ENCODE measurements at regions of chr12 and their contacts with region 1.

Region 1: DNA sequence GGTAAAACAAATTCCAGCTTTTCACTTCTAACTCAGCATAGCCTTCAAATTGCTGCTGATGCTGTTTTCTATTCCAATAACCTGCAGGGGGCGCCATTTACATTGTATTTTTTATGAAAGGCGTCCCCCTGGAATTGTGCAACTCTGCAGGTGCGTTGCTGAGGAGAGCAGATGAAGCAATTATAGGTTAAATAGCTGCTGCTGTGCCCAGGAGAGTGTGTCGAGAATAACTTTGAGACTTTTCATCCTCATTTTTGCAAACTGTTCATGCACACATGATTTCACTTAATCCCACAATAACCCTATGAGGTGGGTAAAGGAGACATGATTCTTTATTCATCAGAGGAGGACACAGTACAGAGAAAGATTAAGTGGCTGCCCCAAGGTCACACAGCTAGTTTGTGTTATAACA is 75.7 kb downstream of the MYRFL start:
- DNase-seq: peak; percentile 56 to 60
- H3K4me3 ChIP-seq: no peak overlapping the region
- H3K27ac ChIP-seq: no peak overlapping the region
- H3K4me1 ChIP-seq: peaks cover 8% of the 10 kb centered on the region
- H3K27me3 ChIP-seq: no peaks in the 10 kb centered on the region
- CTCF ChIP-seq: peak; percentile 95

Region 2: DNA sequence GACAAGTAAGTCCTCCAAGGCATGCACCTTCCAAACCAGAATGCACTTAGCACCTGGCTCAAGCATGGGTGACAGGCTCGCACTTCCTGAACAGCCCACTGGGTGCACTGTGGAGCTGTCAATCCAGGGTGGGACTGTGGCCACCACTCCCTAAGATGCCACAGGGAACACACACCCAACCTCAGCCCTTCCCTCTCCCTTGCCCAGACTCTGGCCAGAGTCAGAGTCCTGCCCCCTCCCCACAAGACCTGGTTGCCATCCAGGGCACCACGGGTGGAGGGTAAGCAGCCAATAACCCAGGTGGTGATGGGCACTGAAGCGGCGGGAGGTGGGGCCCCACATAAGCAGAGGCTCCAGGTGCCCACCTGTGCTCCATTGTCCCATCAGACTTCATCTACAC is 84.9 kb after region 1 on chr12:
- CTCF ChIA-PET with region 1: no interaction called
- POLR2A ChIA-PET with region 1: no interaction called
- intact Hi-C with region 1: loop called (anchors 1 kb)
- DNase-seq: peak in 1 of 2 experiments; percentile 18
- H3K4me3 ChIP-seq: no peak overlapping the region
- H3K27ac ChIP-seq: no peak overlapping the region
- H3K4me1 ChIP-seq: peaks cover 23% of the 10 kb centered on the region
- H3K27me3 ChIP-seq: no peaks in the 10 kb centered on the region
- CTCF ChIP-seq: peak; percentile 49

Region 3: GRCh38 chr12:70049600-70050360 is 149.1 kb after region 1 on chr12:
- CTCF ChIA-PET with region 1: interaction called, 3 read pairs
- POLR2A ChIA-PET with region 1: no interaction called
- intact Hi-C with region 1: loop called (anchors 5 kb)
- DNase-seq: peak; percentile 49 to 88
- H3K4me3 ChIP-seq: peak overlapping the region; percentile 15; the same call in 1 of the 2 replicates
- H3K27ac ChIP-seq: peak overlapping the region; percentile 83
- H3K4me1 ChIP-seq: peaks cover 47% of the 10 kb centered on the region
- H3K27me3 ChIP-seq: no peaks in the 10 kb centered on the region
- CTCF ChIP-seq: no peak

Region 4: DNA sequence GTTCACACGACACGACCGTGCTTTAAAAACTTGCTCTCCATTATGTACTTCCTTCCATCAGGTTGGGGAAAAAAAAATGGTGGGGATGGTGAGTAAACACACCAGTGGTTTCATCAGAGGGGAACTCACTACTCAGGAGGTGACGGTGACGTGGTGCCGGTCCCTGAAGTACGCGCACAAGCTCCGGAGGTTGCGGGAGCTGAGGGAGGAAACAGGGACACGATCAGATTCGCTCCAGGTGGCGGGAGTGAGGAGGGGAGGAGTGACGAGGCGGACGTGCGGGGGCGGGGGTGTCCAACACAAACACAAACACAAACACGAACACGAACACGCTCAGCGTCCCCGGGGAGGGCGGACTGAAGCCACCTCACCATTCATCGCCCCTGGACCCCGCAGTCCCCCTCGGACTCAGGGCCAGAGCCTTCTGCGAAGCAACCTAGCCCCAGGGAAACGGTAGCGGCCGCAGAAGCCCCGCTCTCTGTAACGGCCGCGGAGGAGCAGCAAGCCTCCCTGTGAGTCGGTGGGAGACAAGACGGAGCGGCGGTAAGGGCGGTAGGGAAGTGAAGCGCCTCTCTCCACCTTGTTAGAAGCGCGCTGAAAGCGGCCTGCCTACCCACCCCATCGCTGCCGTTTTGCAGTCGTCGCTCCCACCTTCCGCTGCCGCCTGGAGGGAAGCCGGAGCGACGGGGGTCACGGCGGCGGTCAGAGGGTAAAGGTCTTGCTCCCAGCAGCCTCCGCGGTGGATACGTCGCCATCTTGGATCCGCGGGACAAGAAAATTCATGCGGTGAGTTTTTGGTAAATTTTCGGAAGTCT is 342.2 kb after region 1 on chr12 and contains the start of gene CNOT2:
- CTCF ChIA-PET with region 1: no interaction called
- POLR2A ChIA-PET with region 1: no interaction called
- intact Hi-C with region 1: loop called (anchors 2 kb)
- DNase-seq: peak; percentile 79 to 85
- H3K4me3 ChIP-seq: peak within 1 kb of the TSS; percentile 97
- H3K27ac ChIP-seq: peak within 1 kb of the TSS; percentile 98
- H3K4me1 ChIP-seq: peaks cover 37% of the 10 kb centered on the region
- H3K27me3 ChIP-seq: no peaks in the 10 kb centered on the region
- CTCF ChIP-seq: no peak
- total RNA-seq, gene CNOT2: 57.9 and 85.4 TPM in 2 replicates

Region 5: GRCh38 chr12:70449762-70450341 is 549.1 kb after region 1 on chr12:
- CTCF ChIA-PET with region 1: no interaction called
- POLR2A ChIA-PET with region 1: no interaction called
- intact Hi-C with region 1: no loop called
- DNase-seq: peak in 1 of 2 experiments; percentile 77
- H3K4me3 ChIP-seq: peak overlapping the region; percentile 38; the same call in 1 of the 2 replicates
- H3K27ac ChIP-seq: peak overlapping the region; percentile 86
- H3K4me1 ChIP-seq: peaks cover 29% of the 10 kb centered on the region
- H3K27me3 ChIP-seq: no peaks in the 10 kb centered on the region
- CTCF ChIP-seq: no peak

Region 6: GRCh38 chr12:70576346-70577282 is 675.9 kb after region 1 on chr12:
- CTCF ChIA-PET with region 1: no interaction called
- POLR2A ChIA-PET with region 1: no interaction called
- intact Hi-C with region 1: loop called (anchors 2 kb)
- DNase-seq: peak in 1 of 2 experiments; percentile 65
- H3K4me3 ChIP-seq: no peak overlapping the region
- H3K27ac ChIP-seq: no peak overlapping the region
- H3K4me1 ChIP-seq: no peaks in the 10 kb centered on the region
- H3K27me3 ChIP-seq: no peaks in the 10 kb centered on the region
- CTCF ChIP-seq: peak; percentile 86